Activated CD4-positive, alpha-beta memory T cell treated with anti-CD3 and anti-CD28 coated beads, Interleukin-2, amount 10 ng/mL, durations not matched to agents 7 days and 5 days (primary cell): ENCODE measurements at regions of chr10 and their contacts with region 1.

Region 1: DNA sequence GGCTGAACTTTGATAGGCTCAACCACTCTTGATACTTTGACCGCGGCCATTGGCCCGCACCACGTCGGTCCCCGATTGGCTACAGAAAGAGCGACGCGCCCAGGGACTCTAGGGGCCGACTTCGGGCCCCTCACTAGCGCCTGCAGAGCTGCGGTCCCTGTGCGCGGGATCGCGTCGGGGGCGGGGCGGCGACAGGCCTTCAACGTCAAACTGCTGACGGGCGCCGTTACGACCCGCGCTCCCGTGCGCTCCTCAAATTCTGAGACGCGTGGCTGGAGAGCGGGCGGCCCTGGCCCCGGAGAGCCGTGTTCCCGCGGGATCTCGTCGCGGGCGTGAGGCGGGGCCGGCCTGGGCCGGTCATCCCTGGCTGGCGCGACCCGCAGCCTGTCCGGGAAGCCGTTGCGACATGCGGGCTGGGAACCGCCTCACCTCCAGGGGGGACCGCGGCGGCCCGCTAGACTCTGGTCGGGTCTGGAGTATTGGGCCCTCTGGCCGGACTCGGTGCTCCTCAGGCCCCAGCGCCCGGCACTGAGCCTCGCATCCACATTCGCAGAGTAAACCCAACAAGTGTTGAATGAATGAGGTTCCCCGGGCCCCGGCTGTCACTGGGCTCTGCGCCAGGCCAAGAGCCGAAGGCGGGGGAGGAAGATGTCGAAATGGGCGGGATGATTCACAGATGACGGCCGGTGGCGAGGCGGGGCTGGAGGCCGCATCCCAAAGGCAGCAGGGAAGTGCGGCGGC is 644 bp upstream of the SLC25A28 start:
- DNase-seq: peak; percentile 95
- H3K4me3 Mint-ChIP-seq: peak overlapping the region; percentile 88
- H3K27ac Mint-ChIP-seq: peak overlapping the region; percentile 89
- H3K4me1 Mint-ChIP-seq: peaks cover 47% of the 10 kb centered on the region
- H3K27me3 Mint-ChIP-seq: no peaks in the 10 kb centered on the region

Region 2: DNA sequence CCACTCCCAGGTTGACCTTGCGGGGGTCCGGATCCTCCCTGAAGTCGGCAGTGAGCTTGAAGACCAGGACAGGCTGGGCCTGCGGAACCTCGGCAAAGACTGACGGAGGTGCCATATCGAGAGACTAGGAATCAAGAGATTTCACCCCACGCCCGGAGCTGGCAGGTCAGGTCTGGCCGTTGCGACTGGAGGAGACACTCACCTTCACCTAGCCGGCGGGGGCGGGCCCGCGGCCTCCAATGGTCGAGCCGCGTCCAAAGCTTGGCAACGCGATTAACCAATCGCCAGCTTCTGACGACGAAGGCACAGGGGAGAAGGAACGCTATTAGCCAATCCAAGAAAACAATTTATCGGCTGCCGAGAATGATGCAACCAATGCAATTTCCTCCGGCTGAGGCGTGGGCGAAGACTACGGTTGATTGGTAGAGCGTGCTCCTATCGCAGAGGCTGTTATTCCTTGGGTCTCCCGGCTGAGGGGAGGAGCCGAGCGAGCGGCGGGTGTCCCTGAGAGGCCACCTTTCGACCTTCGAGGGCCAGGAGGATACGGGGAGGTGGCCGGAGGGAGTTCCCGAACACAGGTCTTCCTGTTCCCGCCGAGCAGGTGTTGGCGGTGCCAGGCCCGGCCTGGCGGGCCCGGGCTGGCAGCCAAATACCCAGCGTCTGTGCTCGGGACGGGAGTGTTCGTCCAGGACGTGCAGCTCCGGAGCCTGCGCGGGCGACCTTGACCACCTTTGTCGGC is 190.3 kb before region 1 on chr10 and contains the start of gene GOT1:
- CTCF ChIA-PET with region 1: interaction called, 20 read pairs
- POLR2A ChIA-PET with region 1: interaction called, 48 read pairs
- DNase-seq: peak; percentile 96
- H3K4me3 Mint-ChIP-seq: peak within 1 kb of the TSS; percentile 98
- H3K27ac Mint-ChIP-seq: peak within 1 kb of the TSS; percentile 87
- H3K4me1 Mint-ChIP-seq: peaks cover 36% of the 10 kb centered on the region
- H3K27me3 Mint-ChIP-seq: no peaks in the 10 kb centered on the region
- total RNA-seq, gene GOT1: 36.0 to 36.9 TPM

Region 3: GRCh38 chr10:99435986-99436638 is 184.8 kb before region 1 on chr10:
- CTCF ChIA-PET with region 1: interaction called, 20 read pairs
- POLR2A ChIA-PET with region 1: interaction called, 48 read pairs
- DNase-seq: no peak
- H3K4me3 Mint-ChIP-seq: no peak overlapping the region
- H3K27ac Mint-ChIP-seq: no peak overlapping the region
- H3K4me1 Mint-ChIP-seq: peaks cover 17% of the 10 kb centered on the region
- H3K27me3 Mint-ChIP-seq: no peaks in the 10 kb centered on the region

Region 4: DNA sequence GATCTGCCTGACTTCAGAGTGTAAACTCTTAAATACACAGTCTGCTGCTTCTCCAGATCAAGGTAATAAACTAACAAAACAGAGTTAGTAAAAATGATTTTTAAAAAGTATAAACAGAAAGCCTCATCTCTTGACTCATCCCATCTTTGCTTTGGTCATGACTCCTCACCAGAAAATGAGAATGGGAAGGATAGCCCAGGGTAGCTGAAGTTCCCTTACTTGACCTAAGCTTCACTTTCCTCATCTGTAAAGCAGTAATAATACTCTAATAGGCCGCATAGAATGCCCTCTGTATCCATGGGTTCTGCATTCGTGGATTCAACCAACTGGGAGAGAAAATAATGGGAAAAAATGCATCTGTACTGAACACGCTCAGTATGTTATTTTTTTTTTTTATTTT is 10.6 kb after region 1 on chr10:
- CTCF ChIA-PET with region 1: no interaction called
- POLR2A ChIA-PET with region 1: interaction called, 13 read pairs
- DNase-seq: no peak
- H3K4me3 Mint-ChIP-seq: no peak overlapping the region
- H3K27ac Mint-ChIP-seq: no peak overlapping the region
- H3K4me1 Mint-ChIP-seq: peaks cover 6% of the 10 kb centered on the region
- H3K27me3 Mint-ChIP-seq: peaks cover 23% of the 10 kb centered on the region

Region 5: GRCh38 chr10:99659031-99659867 is 38.4 kb after region 1 on chr10 and contains the start of gene ENTPD7:
- CTCF ChIA-PET with region 1: interaction called, 9 read pairs
- POLR2A ChIA-PET with region 1: interaction called, 53 read pairs
- DNase-seq: peak; percentile 93
- H3K4me3 Mint-ChIP-seq: peak within 1 kb of the TSS; percentile 84
- H3K27ac Mint-ChIP-seq: peak within 1 kb of the TSS; percentile 69
- H3K4me1 Mint-ChIP-seq: peaks cover 24% of the 10 kb centered on the region
- H3K27me3 Mint-ChIP-seq: peaks cover 18% of the 10 kb centered on the region
- total RNA-seq, gene ENTPD7: 4.1 to 4.3 TPM

Region 6: DNA sequence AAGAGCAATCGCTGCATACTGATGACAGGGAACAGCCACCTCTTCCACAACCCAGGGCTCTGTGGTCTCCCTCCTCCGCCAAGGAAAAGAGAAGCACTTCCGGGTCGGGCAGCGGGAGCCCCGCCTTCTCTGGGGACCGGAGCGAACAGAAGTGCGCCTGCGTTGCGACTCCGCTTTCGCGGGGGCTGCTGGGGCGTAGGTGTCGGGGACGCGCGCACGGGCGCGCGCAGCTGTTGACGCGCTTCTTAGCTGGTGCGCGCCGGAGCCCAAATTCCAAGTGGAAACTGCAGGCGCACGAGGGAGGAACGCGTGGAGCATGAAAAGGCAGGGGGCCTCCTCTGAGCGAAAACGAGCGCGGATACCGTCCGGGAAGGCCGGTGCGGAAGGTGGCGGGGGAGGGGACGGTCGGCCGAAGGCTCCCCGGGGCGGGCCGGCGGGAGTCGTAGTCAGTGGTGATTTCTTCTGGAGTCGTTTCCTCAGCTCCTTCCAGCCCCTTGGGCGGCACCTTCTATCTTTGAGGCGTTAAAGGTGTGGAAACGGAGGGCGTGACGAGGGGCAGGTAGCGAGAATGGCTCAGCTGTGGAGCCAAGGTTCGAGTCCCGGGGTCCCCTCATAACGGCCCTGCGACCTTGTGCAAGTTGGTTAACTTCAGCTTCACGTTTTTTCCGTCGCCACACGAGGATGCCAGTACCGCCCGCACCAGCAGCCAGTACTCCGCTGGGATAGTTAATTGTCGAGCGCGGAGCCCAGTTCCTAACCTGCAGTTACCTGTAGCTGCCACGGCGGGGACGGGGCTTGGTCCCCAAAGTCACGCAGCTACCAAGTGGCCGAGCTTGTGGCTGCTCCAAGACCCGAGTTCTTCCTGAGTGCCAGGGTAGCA is 111.4 kb after region 1 on chr10 and contains the starts of genes COX15 and CUTC:
- CTCF ChIA-PET with region 1: interaction called, 8 read pairs
- POLR2A ChIA-PET with region 1: interaction called, 38 read pairs
- DNase-seq: peak; percentile 96
- H3K4me3 Mint-ChIP-seq: peak within 1 kb of the TSS; percentile 100
- H3K27ac Mint-ChIP-seq: peak within 1 kb of the TSS; percentile 100
- H3K4me1 Mint-ChIP-seq: peaks cover 37% of the 10 kb centered on the region
- H3K27me3 Mint-ChIP-seq: no peaks in the 10 kb centered on the region
- total RNA-seq, gene COX15: 38.5 to 39.0 TPM
- total RNA-seq, gene CUTC: 25.6 to 28.2 TPM

Region 7: GRCh38 chr10:99906470-99906869 is 285.6 kb after region 1 on chr10:
- CTCF ChIA-PET with region 1: no interaction called
- POLR2A ChIA-PET with region 1: no interaction called
- DNase-seq: no peak
- H3K4me3 Mint-ChIP-seq: no peak overlapping the region
- H3K27ac Mint-ChIP-seq: no peak overlapping the region
- H3K4me1 Mint-ChIP-seq: peaks cover 7% of the 10 kb centered on the region
- H3K27me3 Mint-ChIP-seq: no peaks in the 10 kb centered on the region